Endothelial cell of umbilical vein (primary cell): ENCODE measurements at regions of chr6 and their contacts with region 1.

Region 1: DNA sequence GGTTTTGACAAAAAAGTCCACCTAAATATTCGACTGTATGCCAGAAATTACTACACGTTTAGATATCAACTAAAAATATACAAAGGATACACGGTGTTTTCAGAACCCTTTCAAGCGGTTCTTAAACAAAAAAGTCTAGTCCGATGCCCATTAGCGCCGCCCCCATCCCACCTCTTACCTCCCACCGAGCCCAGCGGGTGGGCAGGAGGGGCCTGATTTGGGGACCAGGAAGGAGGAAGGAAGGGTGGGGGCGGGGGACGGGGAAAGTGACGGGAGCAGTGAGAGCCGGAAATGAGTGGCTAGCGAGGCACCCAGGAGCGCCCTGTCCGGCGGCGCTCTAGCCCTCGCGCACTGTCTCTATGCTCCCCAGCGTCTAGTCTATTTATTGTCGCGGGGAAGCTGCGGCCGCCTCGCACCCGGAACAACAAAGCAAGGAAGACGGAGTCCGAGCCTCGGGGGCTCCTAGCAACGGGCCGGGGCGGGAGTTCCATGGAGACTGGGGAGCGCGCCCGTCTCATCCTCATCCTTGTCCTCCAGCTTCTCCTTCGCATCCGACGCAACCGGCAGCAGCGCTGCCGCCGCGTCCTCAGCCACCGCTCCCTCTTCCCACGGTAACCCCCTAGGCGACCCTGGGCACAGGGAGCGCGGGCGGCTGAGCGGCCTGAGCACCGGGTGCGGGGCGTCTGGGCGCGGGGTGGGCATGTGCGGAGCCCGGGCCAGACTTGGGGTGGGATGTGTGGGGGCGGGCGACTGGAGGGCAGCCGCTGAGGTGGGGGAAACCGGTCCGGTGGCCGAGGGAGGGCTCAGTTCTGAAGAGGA is at the start of gene TBPL1:
- DNase-seq: peak; percentile 96
- H3K4me3 ChIP-seq: peak within 1 kb of the TSS; percentile 79 to 96 (median 86)
- H3K27ac ChIP-seq: peak within 1 kb of the TSS; percentile 88
- H3K4me1 ChIP-seq: peaks cover 21% of the 10 kb centered on the region
- H3K27me3 ChIP-seq: peaks cover 0 to 7% of the 10 kb centered on the region in 2 experiments
- CTCF ChIP-seq: no peak
- POLR2A ChIP-seq: peak; percentile 74
- total RNA-seq, gene TBPL1: 31.2 and 33.4 TPM in 2 replicates

Region 2: DNA sequence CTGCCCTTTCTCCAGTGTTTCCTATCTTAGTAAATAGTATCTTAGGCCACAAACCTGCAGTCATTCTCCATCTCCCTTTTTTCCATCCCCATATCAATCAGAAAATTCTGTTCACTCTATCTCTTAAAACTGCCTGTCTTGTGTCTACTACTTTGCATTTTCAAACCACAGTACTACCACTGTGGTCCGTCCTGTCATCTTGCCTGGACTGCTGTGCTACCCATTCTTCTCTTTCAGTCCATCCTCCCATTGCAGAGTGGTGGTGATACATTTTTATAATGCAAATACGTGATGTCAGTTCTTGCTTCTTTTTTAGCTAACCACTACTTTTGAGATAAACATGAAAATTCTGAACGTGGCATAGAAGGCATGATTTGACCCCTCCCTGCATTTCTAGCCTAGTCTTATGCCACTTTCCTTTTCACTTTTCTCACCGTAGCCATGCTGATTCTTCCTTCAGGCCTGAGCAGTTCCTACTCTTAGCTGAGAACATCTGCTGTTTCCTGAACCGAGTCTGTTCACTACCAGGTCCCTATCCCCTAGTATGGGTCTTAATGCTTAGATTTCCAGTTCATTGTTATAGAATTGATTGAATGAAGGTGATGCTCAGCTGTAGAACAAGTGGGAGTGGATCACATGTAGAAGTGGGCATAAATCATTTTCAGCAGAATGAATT is 13.8 kb after region 1 on chr6:
- CTCF ChIA-PET with region 1: interaction called, 5 read pairs
- POLR2A ChIA-PET with region 1: no interaction called
- dilution Hi-C with region 1: no loop called
- intact Hi-C with region 1: loop called (anchors 1 kb)
- DNase-seq: no peak
- H3K4me3 ChIP-seq: no peak overlapping the region
- H3K27ac ChIP-seq: no peak overlapping the region
- H3K4me1 ChIP-seq: peaks cover 6% of the 10 kb centered on the region
- H3K27me3 ChIP-seq: no peaks in the 10 kb centered on the region
- CTCF ChIP-seq: no peak
- POLR2A ChIP-seq: no peak

Region 3: GRCh38 chr6:133973109-133973971 is 20.3 kb after region 1 on chr6:
- CTCF ChIA-PET with region 1: interaction called, 11 read pairs
- POLR2A ChIA-PET with region 1: interaction called, 6 read pairs
- dilution Hi-C with region 1: no loop called
- intact Hi-C with region 1: loop called (anchors 1 kb)
- DNase-seq: peak; percentile 64
- H3K4me3 ChIP-seq: no peak overlapping the region
- H3K27ac ChIP-seq: no peak overlapping the region
- H3K4me1 ChIP-seq: peaks cover 4% of the 10 kb centered on the region
- H3K27me3 ChIP-seq: no peaks in the 10 kb centered on the region
- CTCF ChIP-seq: peak; percentile 42 to 45
- POLR2A ChIP-seq: no peak

Region 4: GRCh38 chr6:133991096-133991593 is 38.1 kb after region 1 on chr6:
- CTCF ChIA-PET with region 1: no interaction called
- POLR2A ChIA-PET with region 1: no interaction called
- dilution Hi-C with region 1: no loop called
- intact Hi-C with region 1: loop called (anchors 2 kb)
- DNase-seq: peak; percentile 80
- H3K4me3 ChIP-seq: no peak overlapping the region
- H3K27ac ChIP-seq: no peak overlapping the region
- H3K4me1 ChIP-seq: peaks cover 11% of the 10 kb centered on the region
- H3K27me3 ChIP-seq: no peaks in the 10 kb centered on the region
- CTCF ChIP-seq: no peak
- POLR2A ChIP-seq: no peak

Region 5: GRCh38 chr6:134047673-134048072 is 94.6 kb after region 1 on chr6:
- CTCF ChIA-PET with region 1: no interaction called
- POLR2A ChIA-PET with region 1: no interaction called
- dilution Hi-C with region 1: no loop called
- intact Hi-C with region 1: loop called (anchors 1 kb)
- DNase-seq: no peak
- H3K4me3 ChIP-seq: no peak overlapping the region
- H3K27ac ChIP-seq: no peak overlapping the region
- H3K4me1 ChIP-seq: peaks cover 2% of the 10 kb centered on the region
- H3K27me3 ChIP-seq: no peaks in the 10 kb centered on the region
- CTCF ChIP-seq: no peak
- POLR2A ChIP-seq: no peak